Left cardiac atrium (tissue), 4 donors: ENCODE measurements at regions of chr5 and their contacts with region 1.

Region 1: DNA sequence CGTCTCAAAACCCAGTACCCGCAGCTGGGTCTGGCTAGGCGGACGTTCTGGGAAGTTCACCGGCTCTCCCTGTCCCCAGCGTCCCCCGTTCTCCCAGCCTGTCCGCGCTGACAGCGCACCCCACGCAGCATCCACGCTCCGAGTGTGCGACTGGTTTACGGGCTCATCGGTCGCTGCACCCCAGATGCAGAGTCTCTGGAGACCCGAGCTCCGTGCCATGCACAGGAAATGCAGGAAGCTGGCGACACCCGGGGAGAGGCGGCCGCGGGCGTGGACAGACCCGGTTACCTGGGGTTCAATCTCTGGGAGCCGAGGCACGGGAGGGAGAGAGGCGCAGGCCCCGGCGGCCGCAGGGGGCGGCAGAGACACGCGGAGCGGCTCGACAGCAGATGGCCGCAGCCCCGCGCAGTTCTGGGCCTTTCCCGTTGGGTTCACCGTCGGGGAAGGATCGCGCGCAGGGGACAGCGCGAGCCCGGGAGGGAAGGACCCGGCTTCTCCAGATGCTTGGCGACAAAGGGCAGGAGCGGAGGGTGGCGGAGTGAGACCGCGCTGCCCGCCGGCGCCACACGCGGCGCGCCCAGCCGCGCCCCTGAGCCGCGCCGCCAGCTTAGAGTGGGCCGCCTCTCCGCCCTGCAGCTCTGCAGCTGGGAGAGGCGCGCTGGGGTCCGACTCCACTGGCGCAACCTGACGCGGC is 558 bp downstream of the SHROOM1 start:
- DNase-seq: peak; percentile 84
- ATAC-seq: peak; percentile 90 to 94

Region 2: GRCh38 chr5:132877938-132878337 is 48.0 kb after region 1 on chr5:
- intact Hi-C with region 1: loop called (anchors 2 to 5 kb)
- DNase-seq: no peak
- ATAC-seq: peak; percentile 76 to 79

Region 3: GRCh38 chr5:132883261-132883834 is 53.5 kb after region 1 on chr5:
- intact Hi-C with region 1: loop called (anchors 2 to 5 kb)
- DNase-seq: peak; percentile 32
- ATAC-seq: peak; percentile 84 to 85

Region 4: DNA sequence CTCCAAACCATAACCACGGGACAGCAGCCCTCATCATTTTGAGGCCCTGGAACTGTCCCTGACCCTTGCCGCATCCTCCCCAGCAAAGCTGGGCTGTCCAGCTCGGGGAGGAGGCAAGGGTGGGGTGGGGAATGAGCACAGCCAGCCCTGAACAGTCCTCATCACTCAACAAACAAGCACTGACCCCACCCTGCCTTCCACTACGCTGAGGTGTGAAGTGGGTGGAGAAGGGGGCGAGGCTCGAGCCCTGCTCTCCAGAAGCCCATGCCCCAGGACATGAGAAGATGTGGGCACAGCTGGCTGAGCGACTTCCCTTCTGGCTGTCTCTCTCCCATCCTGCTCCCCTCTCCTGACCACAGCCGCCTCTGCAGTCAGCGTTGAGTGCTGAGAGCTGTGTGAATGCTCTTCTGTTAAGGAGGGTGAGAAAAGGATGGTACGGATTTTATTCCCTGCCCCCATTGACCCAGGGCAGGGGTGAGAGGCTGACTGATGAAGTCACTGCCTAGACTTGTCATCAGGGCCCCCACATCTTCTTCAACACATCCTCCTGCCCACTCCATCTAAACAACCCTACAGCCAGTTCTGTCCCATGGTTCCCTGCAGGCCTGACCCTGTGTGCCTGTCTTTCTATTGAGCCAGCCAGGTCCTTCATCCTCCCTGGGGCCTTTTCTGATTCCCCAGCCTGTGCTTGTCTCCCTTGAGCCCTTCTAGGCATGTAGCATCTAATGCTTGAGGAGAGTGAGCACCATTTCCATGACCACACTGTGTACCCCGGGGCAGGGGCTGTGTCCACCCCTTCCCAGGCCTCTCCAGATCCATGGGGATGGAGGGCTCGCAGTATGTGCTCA is 506.5 kb after region 1 on chr5:
- intact Hi-C with region 1: no loop called
- DNase-seq: no peak
- ATAC-seq: no peak